Ovary (tissue), 10 donors: ENCODE measurements at regions of chr17 and their contacts with region 1.

Region 1: DNA sequence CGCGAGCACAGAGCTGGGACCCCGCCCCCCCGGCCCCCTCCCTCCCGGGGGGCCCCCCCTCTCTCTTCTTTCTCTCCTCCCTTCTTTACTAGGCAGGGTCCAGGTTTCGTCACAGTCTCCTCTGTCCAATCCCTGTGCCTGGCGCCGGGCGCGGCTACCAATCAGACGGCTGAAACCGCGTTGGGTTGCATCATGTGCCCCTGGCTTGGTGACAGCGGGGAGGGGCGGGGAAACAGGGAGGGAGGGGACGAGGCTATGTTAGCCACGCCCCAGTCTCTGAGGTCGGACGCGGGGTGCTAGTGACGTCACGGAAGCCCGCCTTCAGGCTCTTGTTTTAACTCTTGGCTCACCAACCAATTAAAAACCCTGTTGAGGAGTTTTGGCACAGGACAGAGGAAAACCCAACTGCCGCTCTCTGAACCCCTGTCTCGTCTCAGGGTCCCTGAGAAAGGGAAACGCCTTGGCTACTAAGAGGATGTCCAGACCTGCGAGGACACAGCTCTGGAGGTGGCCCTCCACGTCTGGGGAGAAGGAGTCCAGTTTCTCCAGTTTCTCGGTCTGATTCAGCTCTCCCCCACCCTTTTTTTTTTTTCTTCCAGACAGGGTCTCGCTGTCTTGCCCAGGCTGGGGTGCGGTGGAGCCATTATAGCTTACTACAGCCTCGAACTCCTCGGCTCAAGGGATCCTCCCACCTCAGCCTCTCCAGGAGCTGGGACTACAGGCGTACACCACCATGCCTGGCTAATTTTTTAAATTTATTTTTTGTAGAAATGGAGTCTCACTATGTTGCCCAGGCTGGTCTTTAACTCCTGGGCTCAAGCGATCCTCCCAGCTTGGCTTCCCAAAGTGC is 439 bp upstream of the PLEKHH3 start:
- DNase-seq: peak; percentile 100
- H3K4me3 ChIP-seq: peak overlapping the region; percentile 68
- H3K27ac ChIP-seq: peak overlapping the region; percentile 82 to 94
- H3K4me1 ChIP-seq: peaks cover 20% of the 10 kb centered on the region
- H3K27me3 ChIP-seq: no peaks in the 10 kb centered on the region
- CTCF ChIP-seq: no peak
- EP300 ChIP-seq: no peak
- POLR2A ChIP-seq: no peak

Region 2: DNA sequence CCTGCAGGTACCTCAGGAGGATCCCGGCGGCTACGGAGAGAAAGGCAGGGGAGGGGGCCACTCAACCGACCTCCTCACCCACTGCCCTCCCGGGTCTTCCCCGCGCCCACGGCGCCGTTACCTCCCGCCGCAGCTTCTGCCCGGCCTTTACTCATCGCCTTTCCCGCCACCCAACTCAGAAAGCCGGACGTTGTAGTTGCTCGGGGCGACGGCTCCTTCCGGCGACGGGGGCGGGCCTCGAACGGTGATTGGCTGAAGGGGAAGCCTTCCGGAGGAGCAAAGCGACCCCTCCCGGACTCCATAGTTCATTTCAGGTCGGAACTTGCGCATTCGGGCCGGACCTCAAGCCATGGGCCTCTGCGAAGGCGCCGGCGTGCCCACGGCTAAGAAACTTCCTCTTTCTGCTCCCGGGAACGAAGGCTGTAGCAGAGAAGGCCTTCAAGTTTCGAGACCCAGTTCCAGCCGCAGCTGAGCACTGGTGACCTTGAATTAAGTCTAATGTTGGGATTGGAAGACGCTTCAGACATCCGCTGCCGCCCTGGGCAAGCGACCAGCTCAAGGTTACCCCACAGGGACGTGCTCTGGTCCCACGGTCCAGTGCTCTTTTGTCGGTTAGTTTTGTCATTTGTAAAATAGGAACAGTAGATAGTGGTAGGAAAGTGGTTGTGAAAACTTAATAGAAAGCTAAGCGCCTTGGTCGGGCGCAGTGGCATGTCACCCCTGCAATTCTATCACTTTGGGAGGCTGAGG is 99.5 kb before region 1 on chr17 and contains the start of gene PSMC3IP:
- intact Hi-C with region 1: loop called in 3 of 4 experiments (anchors 1 to 5 kb)
- DNase-seq: peak; percentile 93 to 96 (median 94)
- H3K4me3 ChIP-seq: peak within 1 kb of the TSS; percentile 65
- H3K27ac ChIP-seq: peak within 1 kb of the TSS in 1 of 2 donors; percentile 78
- H3K4me1 ChIP-seq: peaks cover 4% of the 10 kb centered on the region
- H3K27me3 ChIP-seq: no peaks in the 10 kb centered on the region
- CTCF ChIP-seq: peak in 2 of 3 donors; percentile 15 to 46
- EP300 ChIP-seq: no peak
- POLR2A ChIP-seq: peak; percentile 39
- total RNA-seq, gene PSMC3IP: 1.4 to 5.3 (median 3.8) TPM

Region 3: DNA sequence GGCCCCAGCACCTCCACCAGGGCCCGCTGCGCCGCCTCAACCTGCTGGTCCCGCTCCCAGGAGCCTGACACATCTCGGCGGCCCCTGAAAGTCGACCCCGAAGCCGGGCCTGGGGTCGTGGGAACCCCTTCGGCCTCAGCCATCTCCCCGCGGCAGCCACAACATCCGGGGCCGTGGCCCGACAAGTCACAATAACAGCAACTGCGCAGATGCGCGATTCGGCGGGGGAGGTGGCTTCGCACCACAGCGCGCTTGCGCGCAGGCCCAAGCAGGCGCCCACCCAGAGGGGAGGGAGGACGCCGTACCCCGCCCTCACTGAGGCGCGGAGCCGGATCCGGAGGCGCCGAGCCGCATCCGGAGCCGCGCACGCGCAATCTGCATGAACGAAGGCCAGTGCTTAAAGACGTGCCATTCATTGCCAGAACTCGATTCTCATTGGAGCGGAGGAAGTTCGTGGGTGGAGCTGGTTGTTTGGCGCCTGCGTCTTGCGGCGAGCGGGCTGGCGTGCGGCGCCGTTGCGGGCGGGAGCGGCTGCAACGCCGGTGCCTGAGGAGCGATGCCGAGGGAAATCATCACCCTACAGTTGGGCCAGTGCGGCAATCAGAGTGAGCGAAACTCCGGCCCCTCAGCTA is 67.9 kb before region 1 on chr17 and contains the starts of genes RETREG3 and TUBG1:
- intact Hi-C with region 1: loop called in 3 of 4 experiments (anchors 2 to 5 kb)
- DNase-seq: peak; percentile 98 to 99 (median 99)
- H3K4me3 ChIP-seq: peak within 1 kb of the TSS; percentile 82
- H3K27ac ChIP-seq: peak within 1 kb of the TSS; percentile 81 to 91
- H3K4me1 ChIP-seq: peaks cover 13% of the 10 kb centered on the region
- H3K27me3 ChIP-seq: no peaks in the 10 kb centered on the region
- CTCF ChIP-seq: peak in 2 of 3 donors; percentile 48 to 61
- EP300 ChIP-seq: no peak
- POLR2A ChIP-seq: peak; percentile 60
- total RNA-seq, gene RETREG3: 39.3 to 63.0 (median 46.4) TPM
- total RNA-seq, gene TUBG1: 12.8 to 41.2 (median 25.6) TPM

Region 4: GRCh38 chr17:42725143-42725542 is 47.9 kb after region 1 on chr17:
- intact Hi-C with region 1: no loop called
- DNase-seq: no peak
- H3K4me3 ChIP-seq: no peak overlapping the region
- H3K27ac ChIP-seq: no peak overlapping the region
- H3K4me1 ChIP-seq: no peaks in the 10 kb centered on the region
- H3K27me3 ChIP-seq: no peaks in the 10 kb centered on the region
- CTCF ChIP-seq: no peak
- EP300 ChIP-seq: no peak
- POLR2A ChIP-seq: no peak

Region 5: GRCh38 chr17:42744806-42745617 is 67.8 kb after region 1 on chr17 and contains the start of gene EZH1:
- intact Hi-C with region 1: loop called in 1 of 4 experiments (anchors 10 kb)
- DNase-seq: peak; percentile 90 to 95 (median 93)
- H3K4me3 ChIP-seq: peak within 1 kb of the TSS; percentile 94
- H3K27ac ChIP-seq: peak within 1 kb of the TSS; percentile 89 to 95
- H3K4me1 ChIP-seq: peaks cover 17% of the 10 kb centered on the region
- H3K27me3 ChIP-seq: no peaks in the 10 kb centered on the region
- CTCF ChIP-seq: peak in 1 of 3 donors; percentile 48
- EP300 ChIP-seq: no peak
- POLR2A ChIP-seq: peak; percentile 63
- total RNA-seq, gene EZH1: 32.9 to 83.4 (median 67.8) TPM

Region 6: GRCh38 chr17:43367737-43368242 is 690.6 kb after region 1 on chr17:
- intact Hi-C with region 1: loop called in 1 of 4 experiments (anchors 10 kb)
- DNase-seq: peak in 2 of 5 donors; percentile 42 to 48
- H3K4me3 ChIP-seq: peak overlapping the region; percentile 62
- H3K27ac ChIP-seq: peak overlapping the region; percentile 99
- H3K4me1 ChIP-seq: peaks cover 8% of the 10 kb centered on the region
- H3K27me3 ChIP-seq: no peaks in the 10 kb centered on the region
- CTCF ChIP-seq: peak in 1 of 3 donors; percentile 3
- EP300 ChIP-seq: no peak
- POLR2A ChIP-seq: no peak